ENCODE measurements at regions of chr11 and their contacts with region 1.

Region 1: GRCh38 chr11:26297189-26297975 is 34.5 kb upstream of the ANO3 start:
- DNase-seq: no peak
- ATAC-seq: peak in 2 of 4 donors; percentile 55
- H3K4me3 ChIP-seq: no peak overlapping the region
- H3K27ac ChIP-seq: no peak overlapping the region
- H3K4me1 ChIP-seq: no peaks in the 10 kb centered on the region
- H3K27me3 ChIP-seq: peaks cover 0 to 9% (median 0%) of the 10 kb centered on the region in 9 donors
- CTCF ChIP-seq: peak; percentile 38 to 68 (median 54)
- POLR2A ChIP-seq: no peak

Region 2: GRCh38 chr11:26187639-26188038 is 109.7 kb before region 1 on chr11:
- intact Hi-C with region 1: no loop called
- DNase-seq: no peak
- ATAC-seq: no peak
- H3K4me3 ChIP-seq: no peak overlapping the region
- H3K27ac ChIP-seq: peak overlapping the region in 1 of 12 donors; percentile 1
- H3K4me1 ChIP-seq: no peaks in the 10 kb centered on the region
- H3K27me3 ChIP-seq: no peaks in the 10 kb centered on the region
- CTCF ChIP-seq: no peak
- POLR2A ChIP-seq: no peak

Region 3: DNA sequence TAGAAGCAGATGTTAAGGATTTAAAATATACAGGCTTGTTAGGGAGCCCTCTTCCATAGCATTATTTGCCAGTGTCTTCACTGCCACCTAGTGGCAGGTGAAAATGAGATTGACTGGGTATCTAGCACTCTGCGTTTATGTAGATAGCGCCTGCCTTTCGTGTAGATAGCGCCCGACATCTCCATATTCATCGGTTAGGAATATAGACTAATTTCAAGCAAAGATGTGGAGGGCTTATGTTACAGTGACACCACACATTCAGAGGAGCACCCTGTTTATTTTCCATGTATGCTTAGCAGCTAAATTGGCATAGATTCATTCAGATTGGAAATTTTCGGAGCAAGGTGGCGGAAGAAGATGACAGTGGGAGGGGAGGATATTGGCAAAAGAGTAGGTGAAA is 352.5 kb after region 1 on chr11:
- intact Hi-C with region 1: loop called in 3 of 10 experiments (anchors 5 to 10 kb)
- DNase-seq: peak in 1 of 5 donors; percentile 13
- ATAC-seq: peak in 2 of 4 donors; percentile 53 to 62
- H3K4me3 ChIP-seq: no peak overlapping the region
- H3K27ac ChIP-seq: no peak overlapping the region
- H3K4me1 ChIP-seq: no peaks in the 10 kb centered on the region
- H3K27me3 ChIP-seq: no peaks in the 10 kb centered on the region
- CTCF ChIP-seq: peak; percentile 29 to 65 (median 50)
- POLR2A ChIP-seq: no peak

Region 4: GRCh38 chr11:27158722-27159679 is 861.6 kb after region 1 on chr11:
- intact Hi-C with region 1: loop called in 8 of 10 experiments (anchors 2 to 10 kb)
- DNase-seq: peak in 3 of 5 donors; percentile 33 to 36 (median 34)
- ATAC-seq: peak; percentile 58 to 96 (median 82)
- H3K4me3 ChIP-seq: no peak overlapping the region
- H3K27ac ChIP-seq: no peak overlapping the region
- H3K4me1 ChIP-seq: no peaks in the 10 kb centered on the region
- H3K27me3 ChIP-seq: no peaks in the 10 kb centered on the region
- CTCF ChIP-seq: peak; percentile 34 to 79 (median 68)
- POLR2A ChIP-seq: no peak